ENCODE measurements at regions of chr22 and their contacts with region 1.

Region 1: GRCh38 chr22:21952586-21953571 is at the start of gene PPM1F:
- DNase-seq: peak; percentile 86 to 97 (median 92)
- ATAC-seq: peak; percentile 91
- H3K4me3 ChIP-seq: peak within 1 kb of the TSS; percentile 73 to 78
- H3K4me3 Mint-ChIP-seq: peak within 1 kb of the TSS; percentile 88
- H3K27ac ChIP-seq: peak within 1 kb of the TSS in 1 of 2 experiments; percentile 44
- H3K27ac Mint-ChIP-seq: no peak within 1 kb of the TSS
- H3K4me1 ChIP-seq: peaks cover 11% of the 10 kb centered on the region
- H3K4me1 Mint-ChIP-seq: peaks cover 23% of the 10 kb centered on the region
- H3K27me3 ChIP-seq: no peaks in the 10 kb centered on the region
- H3K27me3 Mint-ChIP-seq: no peaks in the 10 kb centered on the region
- CTCF ChIP-seq: peak; percentile 82
- total RNA-seq, gene PPM1F: 12.7 to 13.5 TPM

Region 2: DNA sequence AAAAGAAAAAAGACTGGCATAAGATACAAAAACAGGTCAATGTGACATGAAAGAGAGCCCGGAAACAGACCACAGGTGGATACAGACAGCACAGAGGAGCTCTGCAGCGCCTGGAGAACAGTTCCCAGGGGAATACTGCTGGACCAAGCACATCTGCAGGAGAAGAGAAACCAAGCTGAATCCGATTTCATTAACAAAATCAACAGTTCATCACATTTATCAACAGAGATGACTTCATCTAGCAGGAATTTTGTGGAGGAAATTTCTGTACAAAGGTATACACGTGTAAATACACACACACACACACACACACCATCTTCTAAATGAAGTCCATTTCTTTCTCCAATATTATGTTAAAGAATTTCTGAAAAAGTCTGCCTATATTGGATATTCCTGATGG is 234.4 kb before region 1 on chr22:
- CTCF ChIA-PET with region 1: interaction called, 10 read pairs
- POLR2A ChIA-PET with region 1: no interaction called
- intact Hi-C with region 1: loop called (anchors 2 kb)
- DNase-seq: no peak
- ATAC-seq: no peak
- H3K4me3 ChIP-seq: no peak overlapping the region
- H3K4me3 Mint-ChIP-seq: no peak overlapping the region
- H3K27ac ChIP-seq: no peak overlapping the region
- H3K27ac Mint-ChIP-seq: no peak overlapping the region
- H3K4me1 ChIP-seq: no peaks in the 10 kb centered on the region
- H3K4me1 Mint-ChIP-seq: peaks cover under 1% of the 10 kb centered on the region
- H3K27me3 ChIP-seq: no peaks in the 10 kb centered on the region
- H3K27me3 Mint-ChIP-seq: no peaks in the 10 kb centered on the region
- CTCF ChIP-seq: no peak

Region 3: GRCh38 chr22:21778705-21779363 is 174.0 kb before region 1 on chr22:
- CTCF ChIA-PET with region 1: no interaction called
- POLR2A ChIA-PET with region 1: no interaction called
- intact Hi-C with region 1: loop called in 1 of 2 experiments (anchors 2 kb)
- DNase-seq: no peak
- ATAC-seq: no peak
- H3K4me3 ChIP-seq: no peak overlapping the region
- H3K4me3 Mint-ChIP-seq: no peak overlapping the region
- H3K27ac ChIP-seq: no peak overlapping the region
- H3K27ac Mint-ChIP-seq: no peak overlapping the region
- H3K4me1 ChIP-seq: no peaks in the 10 kb centered on the region
- H3K4me1 Mint-ChIP-seq: peaks cover 15% of the 10 kb centered on the region
- H3K27me3 ChIP-seq: no peaks in the 10 kb centered on the region
- H3K27me3 Mint-ChIP-seq: no peaks in the 10 kb centered on the region
- CTCF ChIP-seq: no peak

Region 4: DNA sequence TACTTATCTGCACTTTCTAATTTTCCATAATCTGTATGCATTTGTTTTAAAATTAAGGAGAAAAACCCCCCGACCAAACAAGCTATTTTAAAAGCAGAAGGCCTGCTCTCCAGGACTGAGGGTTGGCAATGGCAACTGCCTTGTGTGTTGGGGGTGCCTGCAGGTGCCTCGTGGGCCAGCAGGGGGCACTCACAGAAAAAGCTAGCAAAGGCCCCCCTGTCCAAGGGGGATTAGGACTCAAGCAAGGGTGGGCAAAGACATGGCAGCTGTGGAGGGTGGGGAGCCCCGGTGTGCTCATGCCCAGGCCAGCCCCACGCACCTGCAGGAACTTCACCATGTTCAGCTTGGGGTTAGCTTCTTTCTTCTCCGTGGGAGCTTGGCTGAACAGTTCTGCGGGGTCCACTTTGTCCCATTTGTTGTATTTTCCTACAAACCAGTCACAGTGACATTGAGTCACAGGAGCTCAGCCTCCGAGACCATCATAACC is 19.5 kb after region 1 on chr22:
- CTCF ChIA-PET with region 1: interaction called, 12 read pairs
- POLR2A ChIA-PET with region 1: interaction called, 3 read pairs
- intact Hi-C with region 1: no loop called
- DNase-seq: peak; percentile 29 to 65 (median 58)
- ATAC-seq: peak; percentile 85
- H3K4me3 ChIP-seq: no peak overlapping the region
- H3K4me3 Mint-ChIP-seq: no peak overlapping the region
- H3K27ac ChIP-seq: no peak overlapping the region
- H3K27ac Mint-ChIP-seq: no peak overlapping the region
- H3K4me1 ChIP-seq: no peaks in the 10 kb centered on the region
- H3K4me1 Mint-ChIP-seq: peaks cover 13% of the 10 kb centered on the region
- H3K27me3 ChIP-seq: no peaks in the 10 kb centered on the region
- H3K27me3 Mint-ChIP-seq: no peaks in the 10 kb centered on the region
- CTCF ChIP-seq: peak; percentile 94

Measured in CD8-positive, alpha-beta T cell (primary cell).